ENCODE measurements at regions of chr17 and their contacts with region 1.

Region 1: DNA sequence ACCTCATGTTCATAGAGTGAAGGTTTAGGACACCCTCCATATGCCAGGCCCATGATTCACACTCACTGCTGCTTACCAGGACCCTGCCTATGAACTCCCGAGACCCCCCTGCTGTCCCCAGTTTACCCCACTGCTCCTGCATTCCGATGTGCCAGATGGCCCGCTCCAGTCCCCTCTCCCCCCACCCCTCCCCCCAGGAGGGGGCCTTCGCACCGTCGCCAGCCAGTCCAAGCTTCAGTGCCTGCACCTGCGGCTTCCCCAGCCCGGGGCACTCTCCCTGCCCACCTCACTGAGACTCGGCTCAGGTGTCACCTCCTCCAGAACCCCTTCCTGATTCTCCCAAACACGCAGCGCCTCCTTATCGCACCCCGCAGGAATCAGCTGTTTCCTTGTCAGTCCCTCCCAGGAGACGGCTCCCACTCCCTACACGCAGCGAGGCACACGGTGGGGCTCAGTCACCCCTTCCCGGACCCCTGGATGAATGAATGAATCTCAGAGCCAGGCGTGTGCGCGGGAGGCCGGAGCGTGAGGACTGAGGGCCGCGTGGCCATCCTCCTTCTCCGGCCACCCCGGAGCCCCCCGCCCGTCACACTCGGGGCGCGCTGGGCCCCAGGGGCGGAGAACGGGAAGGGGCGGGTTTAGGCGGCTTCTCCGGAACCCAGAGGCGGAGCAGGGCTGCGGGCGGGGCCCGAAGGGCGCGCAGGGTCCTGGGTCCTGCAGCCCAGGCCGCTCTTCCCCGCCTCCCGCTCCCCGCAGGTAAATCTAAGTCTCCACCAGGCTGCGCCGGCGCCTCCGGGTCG is 1.6 kb downstream of the MYO1C start:
- DNase-seq: peak; percentile 83 to 93
- ATAC-seq: no peak
- H3K4me3 ChIP-seq: peak overlapping the region; percentile 59 to 80
- H3K27ac ChIP-seq: peak overlapping the region; percentile 72 to 90
- H3K4me1 ChIP-seq: peaks cover 0 to 3% of the 10 kb centered on the region in 2 donors
- H3K27me3 ChIP-seq: no peaks in the 10 kb centered on the region

Region 2: GRCh38 chr17:1365445-1366039 is 125.3 kb before region 1 on chr17:
- intact Hi-C with region 1: loop called in 1 of 2 experiments (anchors 5 kb)
- DNase-seq: peak in 1 of 2 donors; percentile 61
- ATAC-seq: peak; percentile 89
- H3K4me3 ChIP-seq: no peak overlapping the region
- H3K27ac ChIP-seq: no peak overlapping the region
- H3K4me1 ChIP-seq: peaks cover under 1 to 5% of the 10 kb centered on the region in 2 donors
- H3K27me3 ChIP-seq: no peaks in the 10 kb centered on the region

Region 3: DNA sequence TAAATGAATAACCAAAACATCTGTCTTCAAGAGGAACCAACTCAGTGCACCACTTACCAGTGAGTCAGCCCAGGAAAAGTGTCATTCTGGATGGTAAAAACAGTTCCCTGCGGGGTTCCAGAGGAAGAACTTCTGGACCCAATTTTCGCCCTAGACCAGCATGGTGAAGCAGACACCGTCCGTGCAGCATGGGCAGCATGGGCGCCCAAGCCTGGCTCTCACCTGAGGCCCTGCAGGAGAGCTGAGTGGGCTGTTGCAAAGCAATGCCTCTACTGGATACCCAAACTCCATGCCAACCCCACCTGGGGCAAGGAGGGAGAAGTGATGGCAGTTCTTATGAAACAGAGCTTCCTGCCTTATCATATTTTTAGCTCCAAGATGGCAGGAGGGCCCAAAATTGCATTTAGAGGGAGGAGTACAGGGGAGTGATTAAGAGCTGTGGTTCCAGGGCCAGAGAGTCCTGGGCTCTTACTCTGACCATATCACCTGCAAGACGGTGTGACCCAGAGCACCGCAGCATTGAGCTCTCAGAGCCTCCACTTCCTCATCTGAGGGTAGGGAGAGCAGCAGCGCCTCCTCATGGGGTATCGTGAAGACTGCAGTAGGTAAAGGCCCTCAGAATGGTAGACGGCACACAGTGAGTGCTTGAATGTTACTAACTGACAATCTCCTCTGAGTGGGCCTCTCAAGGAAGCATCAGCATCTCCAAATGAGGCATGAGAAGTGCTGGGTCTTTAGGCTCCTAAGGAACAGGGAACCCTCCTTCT is 42.2 kb after region 1 on chr17:
- intact Hi-C with region 1: no loop called
- DNase-seq: no peak
- ATAC-seq: no peak
- H3K4me3 ChIP-seq: no peak overlapping the region
- H3K27ac ChIP-seq: no peak overlapping the region
- H3K4me1 ChIP-seq: no peaks in the 10 kb centered on the region
- H3K27me3 ChIP-seq: no peaks in the 10 kb centered on the region

Measured in aorta (tissue), 5 donors.